Posterior vena cava (tissue), 2 donors: ENCODE measurements at regions of chr14 and their contacts with region 1.

Region 1: DNA sequence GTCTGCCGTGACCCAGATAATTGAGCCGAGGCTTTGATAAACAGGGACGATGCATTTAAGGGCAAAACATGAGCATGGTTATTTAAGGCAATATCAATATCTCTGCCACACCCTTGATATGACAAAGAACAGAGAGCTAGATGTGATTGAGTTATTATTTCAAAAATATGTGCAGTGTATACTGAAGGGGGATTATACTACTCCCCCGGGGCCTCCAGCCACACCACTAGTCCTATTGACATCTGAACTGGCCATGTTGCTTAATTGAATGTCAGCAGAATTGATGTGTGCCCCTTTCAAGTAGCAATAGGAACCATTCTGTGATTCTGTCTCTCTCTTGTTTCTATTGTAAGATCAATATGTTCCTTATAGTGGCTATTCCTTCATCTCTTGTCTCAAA is 794.8 kb upstream of the SEL1L start:
- DNase-seq: no peak

Region 2: GRCh38 chr14:82365471-82365870 is 37.0 kb after region 1 on chr14:
- intact Hi-C with region 1: loop called in 1 of 2 experiments (anchors 2 kb)
- DNase-seq: no peak